ENCODE measurements at regions of chr12 and their contacts with region 1.

Region 1: GRCh38 chr12:124767066-124767821 is 96.4 kb downstream of the SCARB1 start:
- DNase-seq: peak; percentile 64
- H3K4me3 ChIP-seq: no peak overlapping the region
- H3K27ac ChIP-seq: no peak overlapping the region
- H3K4me1 ChIP-seq: peaks cover 5% of the 10 kb centered on the region
- CTCF ChIP-seq: peak; percentile 99

Region 2: DNA sequence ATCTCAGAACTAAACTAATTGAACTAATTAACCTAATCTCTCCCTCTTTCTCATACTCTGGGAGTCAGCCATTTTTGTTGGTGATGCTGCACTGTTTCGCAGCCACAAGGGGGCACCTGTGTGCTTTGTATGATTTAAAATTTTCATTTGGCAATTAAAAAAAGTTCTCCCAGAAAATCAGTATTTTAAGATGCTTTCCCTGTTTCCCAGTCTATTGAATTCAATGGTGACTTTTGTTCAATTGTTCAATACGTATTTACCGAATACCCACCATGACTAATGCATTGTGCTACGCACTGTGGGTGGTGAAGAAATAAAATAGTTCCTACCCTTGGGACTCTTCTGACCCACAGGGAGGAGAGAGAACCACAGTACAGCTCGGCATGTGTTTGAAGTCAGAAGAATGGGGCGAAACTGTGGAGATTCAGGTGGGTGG is 730.6 kb before region 1 on chr12:
- CTCF ChIA-PET with region 1: no interaction called
- POLR2A ChIA-PET with region 1: no interaction called
- intact Hi-C with region 1: loop called (anchors 1 kb)
- DNase-seq: peak; percentile 53
- H3K4me3 ChIP-seq: no peak overlapping the region
- H3K27ac ChIP-seq: no peak overlapping the region
- H3K4me1 ChIP-seq: no peaks in the 10 kb centered on the region
- CTCF ChIP-seq: peak; percentile 99

Region 3: DNA sequence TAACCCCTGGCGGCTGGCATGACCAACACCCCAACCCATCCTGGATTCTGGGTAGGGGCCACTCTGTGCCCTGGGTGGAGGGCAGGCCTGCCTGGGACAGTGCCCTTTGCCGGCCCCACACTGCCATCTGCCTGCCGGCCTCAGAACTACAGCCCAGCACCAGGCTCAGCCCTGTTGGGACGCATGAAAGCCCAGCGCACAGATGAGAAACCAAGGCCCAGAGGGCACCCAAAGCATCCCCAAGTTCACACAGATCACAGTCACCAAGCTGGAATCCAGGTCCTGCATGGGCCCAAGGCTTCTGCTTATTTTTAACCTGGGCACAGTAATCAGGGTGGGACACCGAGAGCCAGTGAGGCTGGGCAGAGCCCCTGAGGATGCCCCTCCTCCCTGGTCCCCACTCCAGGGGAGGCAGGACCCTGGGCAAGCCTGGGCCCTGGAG is 446.2 kb before region 1 on chr12:
- CTCF ChIA-PET with region 1: no interaction called
- POLR2A ChIA-PET with region 1: no interaction called
- intact Hi-C with region 1: loop called (anchors 5 kb)
- DNase-seq: peak; percentile 47
- H3K4me3 ChIP-seq: no peak overlapping the region
- H3K27ac ChIP-seq: no peak overlapping the region
- H3K4me1 ChIP-seq: no peaks in the 10 kb centered on the region
- CTCF ChIP-seq: peak; percentile 85

Region 4: DNA sequence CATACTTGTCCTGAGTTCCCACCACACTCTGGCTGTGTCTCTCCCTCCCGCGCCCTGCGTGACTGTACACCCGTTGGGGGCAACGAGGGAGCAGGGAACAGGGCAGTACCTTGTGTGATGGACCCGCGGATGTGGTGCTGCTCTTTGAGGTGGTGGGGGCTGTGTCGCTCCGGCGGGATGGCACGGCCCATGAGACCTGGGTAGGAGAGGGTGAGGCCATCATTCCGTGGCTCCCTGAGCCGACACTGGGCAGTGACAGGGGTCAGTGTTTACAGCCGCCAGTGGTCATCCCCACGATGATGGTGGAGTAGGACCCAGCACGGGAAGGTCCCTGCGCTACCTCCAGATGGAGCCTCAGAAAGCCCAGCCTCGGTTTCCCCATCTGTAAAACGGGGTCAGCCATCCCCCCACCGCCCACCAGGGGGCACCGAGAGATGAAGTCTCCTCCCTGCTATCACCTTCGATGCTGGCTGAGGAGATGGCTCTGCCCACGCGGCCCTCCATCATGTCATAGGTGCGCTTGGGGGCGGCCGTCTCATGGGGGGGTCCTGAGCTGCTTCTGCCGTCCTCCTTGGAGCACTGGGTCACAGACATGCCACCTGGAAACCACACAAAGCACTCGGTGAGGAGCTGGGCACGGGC is 419.4 kb before region 1 on chr12:
- CTCF ChIA-PET with region 1: no interaction called
- POLR2A ChIA-PET with region 1: no interaction called
- intact Hi-C with region 1: loop called (anchors 1 kb)
- DNase-seq: peak; percentile 23
- H3K4me3 ChIP-seq: no peak overlapping the region
- H3K27ac ChIP-seq: no peak overlapping the region
- H3K4me1 ChIP-seq: no peaks in the 10 kb centered on the region
- CTCF ChIP-seq: peak; percentile 77

Region 5: DNA sequence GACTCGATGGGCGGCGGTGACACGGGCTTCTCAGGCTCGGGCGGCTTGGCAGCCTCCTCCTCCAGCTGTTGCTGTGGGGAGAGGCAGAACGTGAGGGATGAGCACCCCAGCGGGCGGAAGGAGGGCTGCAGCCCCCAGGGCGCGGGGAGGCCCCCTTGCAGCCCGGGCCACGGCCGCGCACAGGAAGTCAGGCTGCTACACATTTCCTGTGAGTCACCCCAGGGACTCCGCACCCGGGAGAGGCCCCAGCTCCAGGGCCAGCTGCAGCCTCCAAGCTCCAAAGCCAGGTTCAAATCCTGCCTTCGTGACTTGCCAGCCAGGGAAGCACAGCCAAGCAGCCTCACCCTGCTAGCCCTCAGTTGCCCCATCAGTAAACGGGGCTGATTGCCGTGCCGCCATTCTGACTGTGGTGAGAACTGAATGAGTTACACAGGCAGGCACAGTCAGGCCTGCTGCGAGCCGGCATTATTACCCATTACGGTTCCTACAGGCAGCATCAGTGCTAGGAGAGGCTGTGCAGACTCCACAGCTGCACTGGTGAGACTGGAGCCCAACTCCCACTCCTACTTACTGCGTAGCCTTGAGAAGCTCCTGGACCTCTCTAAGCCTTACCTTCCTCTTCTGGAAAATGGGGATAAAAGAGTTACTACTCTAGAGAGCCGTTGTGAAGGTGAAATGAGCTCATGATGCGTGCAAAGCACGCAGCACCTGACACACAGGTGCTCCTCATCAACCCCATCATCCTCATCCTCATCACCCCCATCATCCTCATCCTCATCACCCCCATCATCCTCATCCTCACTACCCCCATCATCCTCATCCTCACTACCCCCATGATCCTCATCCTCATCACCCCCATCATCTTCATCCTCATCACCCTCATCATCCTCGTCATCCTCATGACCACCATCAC is 300.8 kb before region 1 on chr12:
- CTCF ChIA-PET with region 1: no interaction called
- POLR2A ChIA-PET with region 1: no interaction called
- intact Hi-C with region 1: loop called (anchors 5 kb)
- DNase-seq: peak; percentile 89
- H3K4me3 ChIP-seq: peak overlapping the region; percentile 46
- H3K27ac ChIP-seq: peak overlapping the region; percentile 79
- H3K4me1 ChIP-seq: peaks cover 28% of the 10 kb centered on the region
- CTCF ChIP-seq: peak; percentile 56

Region 6: DNA sequence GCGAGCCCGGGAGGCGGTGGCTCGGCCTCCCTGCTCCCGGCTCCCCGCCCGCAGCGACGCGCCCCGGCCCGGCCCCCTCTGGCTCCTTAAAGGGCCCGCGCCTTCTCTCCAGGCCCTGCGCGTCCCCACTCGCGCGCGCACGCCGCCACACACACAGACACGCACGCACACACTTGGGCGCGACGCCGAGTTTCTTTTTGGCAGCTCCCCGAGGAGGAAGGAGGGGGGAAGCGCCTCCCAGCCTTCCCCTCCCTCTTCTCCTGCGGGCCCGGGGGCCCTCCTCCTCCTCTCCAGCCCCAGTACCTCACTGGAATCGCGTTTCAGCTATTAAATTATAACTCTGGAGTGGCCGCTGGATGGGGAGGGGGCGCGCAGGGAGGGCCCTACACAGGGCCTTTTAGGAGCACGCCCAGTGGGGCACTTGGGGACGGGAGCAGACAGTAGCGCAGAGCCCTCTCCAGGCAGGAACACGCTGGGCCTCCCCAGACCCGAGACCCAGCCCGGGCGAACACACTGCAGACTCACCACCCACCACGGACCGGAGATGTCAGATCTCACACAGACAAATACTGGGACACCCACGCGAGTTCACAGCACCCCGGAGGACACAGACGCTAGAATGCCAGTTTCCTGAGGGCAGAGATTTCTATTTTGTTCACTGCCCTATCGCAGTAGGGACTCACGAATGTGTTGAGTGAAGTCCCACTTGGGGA is 199.4 kb before region 1 on chr12:
- CTCF ChIA-PET with region 1: no interaction called
- POLR2A ChIA-PET with region 1: no interaction called
- intact Hi-C with region 1: loop called (anchors 5 kb)
- DNase-seq: peak; percentile 81
- H3K4me3 ChIP-seq: peak overlapping the region; percentile 67
- H3K27ac ChIP-seq: peak overlapping the region; percentile 18
- H3K4me1 ChIP-seq: peaks cover 39% of the 10 kb centered on the region
- CTCF ChIP-seq: no peak

Region 7: DNA sequence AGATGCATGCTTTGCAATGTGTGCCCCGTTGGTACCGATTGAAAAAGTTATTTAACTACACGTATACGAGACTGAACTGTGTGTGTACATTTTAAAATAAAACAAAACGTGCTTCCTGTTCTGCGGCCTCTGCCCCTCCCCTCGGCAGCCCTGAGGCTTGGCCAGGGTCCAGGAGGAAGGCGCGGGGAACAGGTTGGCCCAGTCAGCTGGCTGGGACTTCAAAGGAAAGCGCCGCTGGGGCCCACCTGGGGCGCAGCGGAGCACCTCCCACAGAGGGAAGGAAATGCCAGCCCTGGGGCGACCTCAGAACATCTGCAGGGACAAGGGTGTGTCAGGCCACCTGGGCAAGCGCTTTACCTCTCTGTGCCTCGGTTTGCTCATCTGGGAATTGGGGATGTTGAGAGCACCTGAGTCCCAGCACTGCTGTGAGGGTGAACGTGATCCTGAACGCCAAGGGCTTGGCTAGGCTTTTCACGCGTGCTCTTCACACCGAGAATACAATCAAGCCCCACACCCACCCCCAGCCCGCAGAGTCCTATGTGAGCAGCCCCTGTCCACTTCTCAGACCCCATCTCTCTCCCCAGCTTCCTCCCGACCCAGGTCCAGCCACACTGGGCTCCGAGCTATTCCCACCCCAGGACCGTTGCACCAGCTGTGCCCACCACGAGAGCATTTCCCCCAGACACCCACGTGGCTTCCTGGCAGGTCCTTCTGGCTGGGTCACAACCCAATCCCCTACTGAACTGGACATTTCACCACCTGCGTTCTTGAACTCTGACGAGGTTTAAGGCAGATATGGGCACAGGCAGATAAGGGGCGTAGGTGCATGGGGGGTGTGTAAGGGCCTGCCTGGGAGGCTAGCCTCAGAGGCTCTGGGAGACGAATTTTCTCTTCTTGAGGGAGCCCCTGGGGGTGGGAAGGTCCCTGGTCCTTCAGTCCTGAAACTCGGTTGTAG is 157.9 kb before region 1 on chr12:
- CTCF ChIA-PET with region 1: no interaction called
- POLR2A ChIA-PET with region 1: no interaction called
- intact Hi-C with region 1: loop called (anchors 10 kb)
- DNase-seq: peak; percentile 96
- H3K4me3 ChIP-seq: peak overlapping the region; percentile 48
- H3K27ac ChIP-seq: peak overlapping the region; percentile 89
- H3K4me1 ChIP-seq: peaks cover 39% of the 10 kb centered on the region
- CTCF ChIP-seq: peak; percentile 24; the same call in 1 of the 2 replicates

Region 8: DNA sequence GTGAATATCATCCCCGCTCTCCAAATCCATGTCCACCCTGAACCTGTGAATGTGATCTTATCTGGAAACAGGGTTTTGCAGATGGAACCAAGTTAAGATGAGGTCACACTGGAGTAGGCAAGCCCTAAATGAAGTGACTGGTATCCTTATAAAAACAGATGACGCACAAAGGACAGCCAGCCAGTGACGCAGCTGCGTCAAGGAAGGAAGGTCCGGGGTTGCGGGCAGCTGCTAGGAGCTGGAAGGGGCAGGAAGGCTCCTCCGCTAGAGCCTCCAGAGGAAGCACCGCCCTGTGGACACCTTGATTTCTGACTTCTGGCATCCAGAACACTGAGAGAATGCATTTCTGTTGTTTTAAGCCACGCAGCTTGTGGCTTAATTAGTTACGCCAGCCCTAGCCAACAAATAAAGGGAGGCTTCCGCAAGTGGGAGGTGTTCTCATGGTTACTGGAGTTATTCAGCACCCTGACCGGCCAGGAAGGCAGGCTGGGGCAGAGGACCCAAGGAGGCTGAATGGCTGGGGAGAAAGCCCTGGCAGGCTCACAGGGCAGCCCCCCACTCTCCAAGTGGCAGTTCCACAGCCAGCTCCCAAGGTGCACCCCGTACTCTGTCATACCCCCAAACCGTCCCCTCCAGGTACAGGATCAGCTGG is 72.3 kb before region 1 on chr12:
- CTCF ChIA-PET with region 1: no interaction called
- POLR2A ChIA-PET with region 1: no interaction called
- intact Hi-C with region 1: no loop called
- DNase-seq: no peak
- H3K4me3 ChIP-seq: no peak overlapping the region
- H3K27ac ChIP-seq: no peak overlapping the region
- H3K4me1 ChIP-seq: no peaks in the 10 kb centered on the region
- CTCF ChIP-seq: no peak

Region 9: DNA sequence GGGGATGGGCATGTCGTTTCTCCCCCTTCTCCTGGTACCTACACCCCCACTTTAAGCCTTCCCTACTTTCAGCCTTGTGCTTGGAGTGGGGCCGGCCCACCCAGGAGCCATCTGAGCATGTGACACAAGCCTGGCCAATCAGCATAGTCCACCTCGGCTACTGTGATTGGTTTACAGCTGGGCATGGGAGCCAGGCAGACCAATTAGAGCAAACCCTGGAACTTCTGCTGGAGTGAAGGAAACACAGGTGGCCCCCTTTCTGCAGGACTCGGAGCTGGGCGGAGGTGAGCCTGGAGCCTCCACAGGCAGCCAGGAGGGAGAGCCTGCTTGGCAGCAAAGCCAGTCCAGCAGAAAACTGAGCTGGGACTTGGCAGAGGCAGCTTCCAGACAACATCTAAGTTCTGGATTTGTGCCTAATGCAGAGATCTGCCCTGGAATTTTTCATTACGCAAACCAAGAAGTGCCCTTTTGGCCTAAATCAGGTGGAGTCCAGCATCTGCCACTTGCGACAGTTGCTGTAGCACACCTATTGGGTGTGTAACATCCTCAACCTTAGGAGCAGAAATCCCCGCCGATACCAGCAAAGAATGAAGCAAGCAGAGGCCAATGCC is 36.9 kb after region 1 on chr12:
- CTCF ChIA-PET with region 1: no interaction called
- POLR2A ChIA-PET with region 1: no interaction called
- intact Hi-C with region 1: no loop called
- DNase-seq: no peak
- H3K4me3 ChIP-seq: no peak overlapping the region
- H3K27ac ChIP-seq: no peak overlapping the region
- H3K4me1 ChIP-seq: no peaks in the 10 kb centered on the region
- CTCF ChIP-seq: no peak

Region 10: DNA sequence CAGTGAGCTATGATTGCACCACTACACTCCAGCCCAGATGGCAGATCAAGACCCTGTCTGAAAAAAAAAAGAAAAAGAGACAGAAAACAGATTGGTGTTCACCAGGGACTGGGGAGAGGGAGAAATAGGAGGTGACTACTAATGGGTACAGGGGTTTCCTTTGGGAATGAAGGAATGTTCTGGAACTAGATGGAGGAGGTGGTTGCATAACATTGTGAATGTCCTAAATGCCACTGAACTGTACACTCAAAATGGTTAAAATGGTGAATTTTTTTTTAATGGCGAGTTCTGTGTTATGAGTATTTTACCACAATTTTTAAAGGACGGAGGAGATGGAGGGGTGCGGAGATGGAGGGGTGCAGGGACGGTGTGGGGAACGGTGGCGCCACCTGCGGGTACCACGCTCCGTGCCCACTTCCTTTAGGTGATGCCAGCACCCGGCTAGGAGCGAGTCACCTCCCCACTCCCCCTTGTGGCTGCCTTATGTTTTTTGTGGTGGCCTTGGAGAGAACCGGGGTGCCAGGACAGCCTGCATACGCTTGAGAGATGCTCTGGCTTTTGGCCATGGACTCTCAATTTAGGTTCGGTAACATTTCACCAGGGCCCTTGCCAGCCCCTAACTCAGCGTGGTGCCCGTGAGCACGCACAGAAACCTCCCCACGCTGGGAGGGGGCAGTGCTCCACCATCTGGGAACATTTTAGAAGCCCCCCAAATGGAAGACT is 131.1 kb after region 1 on chr12:
- CTCF ChIA-PET with region 1: no interaction called
- POLR2A ChIA-PET with region 1: no interaction called
- intact Hi-C with region 1: no loop called
- DNase-seq: peak; percentile 86
- H3K4me3 ChIP-seq: peak overlapping the region; percentile 40
- H3K27ac ChIP-seq: peak overlapping the region; percentile 32
- H3K4me1 ChIP-seq: peaks cover 65% of the 10 kb centered on the region
- CTCF ChIP-seq: peak; percentile 93